ENCODE measurements at regions of chr3 and their contacts with region 1.

Region 1: GRCh38 chr3:46866720-46867549 is 3.7 kb upstream of the MYL3 start:
- DNase-seq: peak; percentile 42
- H3K4me3 ChIP-seq: no peak overlapping the region
- H3K27ac ChIP-seq: peak overlapping the region in 1 of 2 donors; percentile 42
- H3K4me1 ChIP-seq: peaks cover 9% of the 10 kb centered on the region
- H3K27me3 ChIP-seq: no peaks in the 10 kb centered on the region
- CTCF ChIP-seq: peak; percentile 76 to 82 (median 79)
- POLR2A ChIP-seq: no peak

Region 2: GRCh38 chr3:46895204-46895660 is 28.3 kb after region 1 on chr3:
- intact Hi-C with region 1: loop called (anchors 2 kb)
- DNase-seq: peak; percentile 63
- H3K4me3 ChIP-seq: no peak overlapping the region
- H3K27ac ChIP-seq: no peak overlapping the region
- H3K4me1 ChIP-seq: peaks cover 6% of the 10 kb centered on the region
- H3K27me3 ChIP-seq: peaks cover 5% of the 10 kb centered on the region
- CTCF ChIP-seq: peak; percentile 72 to 93 (median 87)
- POLR2A ChIP-seq: no peak

Region 3: DNA sequence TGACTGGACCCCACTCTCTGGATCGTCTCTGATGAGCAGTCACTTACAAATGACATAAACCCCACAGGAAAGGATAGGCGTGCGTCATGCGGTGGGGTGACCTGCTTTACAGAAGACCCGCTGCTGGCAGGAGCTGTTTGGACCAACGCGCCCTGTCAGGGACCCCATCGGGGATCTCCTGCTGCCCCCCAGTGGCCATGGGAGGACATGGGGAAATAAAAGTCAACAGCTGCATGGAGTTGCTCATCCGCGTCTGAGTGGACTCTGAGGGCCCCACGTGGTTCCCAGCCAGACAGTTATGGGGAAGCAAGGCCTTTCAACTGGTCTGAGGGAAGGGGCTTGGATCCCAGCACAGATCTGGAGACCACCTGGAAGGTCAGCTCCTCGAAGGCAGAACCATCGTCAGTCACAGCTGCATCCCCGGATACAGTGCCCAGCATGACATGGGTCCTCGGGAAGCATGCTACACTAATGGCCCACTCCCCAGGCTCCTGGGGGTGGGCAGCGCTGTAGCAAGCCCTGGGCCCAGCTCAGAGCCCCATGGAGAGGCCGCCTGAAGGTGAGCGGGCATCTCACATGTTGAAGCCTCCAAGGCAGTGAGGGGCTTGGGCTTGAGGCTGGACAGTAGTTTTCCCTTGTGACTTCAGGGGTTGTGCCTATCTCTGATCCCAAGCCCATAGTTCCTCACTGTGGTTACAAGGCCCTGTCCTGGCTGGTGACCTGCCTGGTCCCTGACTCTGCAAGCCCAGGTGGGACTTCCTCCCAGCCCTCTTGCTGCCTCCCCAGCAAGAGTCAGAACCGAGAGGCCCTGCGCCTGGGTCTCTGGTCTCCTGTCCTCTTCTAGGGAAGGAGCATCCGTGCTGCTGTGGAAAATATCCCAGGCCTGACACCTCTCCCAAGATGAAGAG is 42.9 kb after region 1 on chr3:
- intact Hi-C with region 1: loop called (anchors 5 kb)
- DNase-seq: peak; percentile 62
- H3K4me3 ChIP-seq: no peak overlapping the region
- H3K27ac ChIP-seq: no peak overlapping the region
- H3K4me1 ChIP-seq: no peaks in the 10 kb centered on the region
- H3K27me3 ChIP-seq: no peaks in the 10 kb centered on the region
- CTCF ChIP-seq: peak; percentile 60 to 84 (median 76)
- POLR2A ChIP-seq: no peak

Region 4: GRCh38 chr3:46976326-46977190 is 109.6 kb after region 1 on chr3 and contains the start of gene CCDC12:
- intact Hi-C with region 1: no loop called
- DNase-seq: peak; percentile 98
- H3K4me3 ChIP-seq: peak within 1 kb of the TSS; percentile 61 to 66
- H3K27ac ChIP-seq: peak within 1 kb of the TSS; percentile 93
- H3K4me1 ChIP-seq: peaks cover 3% of the 10 kb centered on the region
- H3K27me3 ChIP-seq: no peaks in the 10 kb centered on the region
- CTCF ChIP-seq: peak in 2 of 4 experiments; percentile 16 to 26
- POLR2A ChIP-seq: peak; percentile 69
- total RNA-seq, gene CCDC12: 34.6 to 78.7 TPM